IMR-90 (cell line): ENCODE measurements at regions of chr5 and their contacts with region 1.

Region 1: GRCh38 chr5:139651853-139652787 is 4.0 kb downstream of the CXXC5 start:
- DNase-seq: peak; percentile 94
- ATAC-seq: peak; percentile 40
- H3K4me3 ChIP-seq: peak overlapping the region; percentile 17; the same call in 1 of the 2 replicates
- H3K27ac ChIP-seq: peak overlapping the region; percentile 86
- H3K4me1 ChIP-seq: peaks cover 46% of the 10 kb centered on the region
- H3K27me3 ChIP-seq: no peaks in the 10 kb centered on the region
- CTCF ChIP-seq: no peak
- POLR2A ChIP-seq: no peak
- RAD21 ChIP-seq: no peak; the same call in 1 of the 2 replicates

Region 2: DNA sequence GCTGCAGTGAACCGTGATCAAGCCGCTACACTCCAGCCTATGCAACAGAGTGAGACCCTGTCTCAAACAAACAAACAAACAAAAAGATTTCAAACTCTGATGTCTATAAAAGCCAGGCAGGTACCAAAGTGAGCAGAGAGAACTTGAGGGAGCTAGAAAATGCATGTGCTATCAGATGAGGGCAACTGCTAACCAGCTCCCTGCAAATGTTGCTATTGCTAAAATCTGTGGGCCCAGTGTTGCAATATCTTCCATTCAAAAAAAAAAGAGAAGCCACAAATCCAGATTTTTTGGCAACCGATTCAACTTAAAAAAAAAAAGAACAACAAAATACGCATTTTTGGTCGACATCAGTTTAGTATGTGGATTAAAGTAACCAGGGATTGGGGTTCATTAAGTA is 85.5 kb before region 1 on chr5:
- CTCF ChIA-PET with region 1: no interaction called
- POLR2A ChIA-PET with region 1: interaction called, 12 read pairs
- dilution Hi-C with region 1: no loop called
- in situ Hi-C with region 1: no loop called
- intact Hi-C with region 1: no loop called
- DNase-seq: no peak
- ATAC-seq: no peak
- H3K4me3 ChIP-seq: no peak overlapping the region
- H3K27ac ChIP-seq: no peak overlapping the region
- H3K4me1 ChIP-seq: peaks cover 7% of the 10 kb centered on the region
- H3K27me3 ChIP-seq: no peaks in the 10 kb centered on the region
- CTCF ChIP-seq: no peak
- POLR2A ChIP-seq: no peak
- RAD21 ChIP-seq: no peak

Region 3: DNA sequence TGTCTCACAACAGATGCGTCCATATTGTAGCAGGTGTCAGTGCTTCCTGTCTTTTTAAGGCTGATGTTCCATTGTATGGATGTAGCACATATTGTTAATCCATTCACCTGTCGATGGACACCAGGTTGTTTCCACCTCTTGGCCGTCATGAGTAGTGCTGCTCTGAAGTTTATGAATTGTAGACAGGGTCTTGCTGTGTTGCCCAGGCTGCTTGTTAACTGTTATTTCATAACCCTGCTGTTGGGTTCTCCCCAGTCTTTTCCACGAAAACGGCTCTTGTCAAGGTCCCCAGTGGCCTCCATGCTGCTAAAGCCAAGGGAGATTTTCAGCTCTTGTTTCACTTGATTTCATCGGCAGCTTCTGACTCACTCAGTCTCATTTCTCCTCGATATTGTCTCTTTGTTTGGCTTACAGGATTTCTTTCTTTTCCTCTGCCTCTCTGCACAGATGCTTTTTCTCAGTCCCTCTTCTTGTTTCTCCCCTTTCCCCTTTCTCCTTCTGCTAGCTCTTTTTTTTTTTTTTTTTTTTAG is 131.4 kb after region 1 on chr5:
- CTCF ChIA-PET with region 1: no interaction called
- POLR2A ChIA-PET with region 1: no interaction called
- dilution Hi-C with region 1: no loop called
- in situ Hi-C with region 1: no loop called
- intact Hi-C with region 1: no loop called
- DNase-seq: peak; percentile 20
- ATAC-seq: no peak
- H3K4me3 ChIP-seq: no peak overlapping the region
- H3K27ac ChIP-seq: no peak overlapping the region
- H3K4me1 ChIP-seq: no peaks in the 10 kb centered on the region
- H3K27me3 ChIP-seq: peaks cover 32% of the 10 kb centered on the region
- CTCF ChIP-seq: no peak
- POLR2A ChIP-seq: no peak
- RAD21 ChIP-seq: no peak

Region 4: GRCh38 chr5:140205216-140205615 is 553.1 kb after region 1 on chr5:
- CTCF ChIA-PET with region 1: no interaction called
- POLR2A ChIA-PET with region 1: no interaction called
- dilution Hi-C with region 1: no loop called
- in situ Hi-C with region 1: no loop called
- intact Hi-C with region 1: no loop called
- DNase-seq: no peak
- ATAC-seq: no peak
- H3K4me3 ChIP-seq: no peak overlapping the region
- H3K27ac ChIP-seq: no peak overlapping the region
- H3K4me1 ChIP-seq: no peaks in the 10 kb centered on the region
- H3K27me3 ChIP-seq: no peaks in the 10 kb centered on the region
- CTCF ChIP-seq: no peak
- POLR2A ChIP-seq: no peak
- RAD21 ChIP-seq: no peak